SK-N-SH (cell line): ENCODE measurements at regions of chr17 and their contacts with region 1.

Region 1: GRCh38 chr17:19766422-19767270 is 18.5 kb upstream of the ALDH3A1 start:
- DNase-seq: peak; percentile 87
- H3K4me3 ChIP-seq: peak overlapping the region in 1 of 2 experiments; percentile 46; a peak in 1 of 4 replicates
- H3K27ac ChIP-seq: no peak overlapping the region
- H3K4me1 ChIP-seq: peaks cover 2 to 3% of the 10 kb centered on the region in 2 experiments; a peak in 2 of 4 replicates
- H3K27me3 ChIP-seq: no peaks in the 10 kb centered on the region
- CTCF ChIP-seq: peak; percentile 96
- EP300 ChIP-seq: no peak
- RAD21 ChIP-seq: peak; percentile 95

Region 2: GRCh38 chr17:19464031-19465026 is 302.3 kb before region 1 on chr17:
- CTCF ChIA-PET with region 1: interaction called, 11 read pairs
- POLR2A ChIA-PET with region 1: no interaction called
- DNase-seq: no peak
- H3K4me3 ChIP-seq: no peak overlapping the region
- H3K27ac ChIP-seq: no peak overlapping the region
- H3K4me1 ChIP-seq: no peaks in the 10 kb centered on the region; a peak in 1 of 4 replicates
- H3K27me3 ChIP-seq: no peaks in the 10 kb centered on the region
- CTCF ChIP-seq: no peak
- EP300 ChIP-seq: no peak
- RAD21 ChIP-seq: no peak

Region 3: GRCh38 chr17:19533718-19534561 is 232.7 kb before region 1 on chr17 and contains the start of gene SLC47A1:
- CTCF ChIA-PET with region 1: interaction called, 16 read pairs
- POLR2A ChIA-PET with region 1: no interaction called
- DNase-seq: peak; percentile 88
- H3K4me3 ChIP-seq: peak within 1 kb of the TSS; percentile 57 to 82
- H3K27ac ChIP-seq: no peak within 1 kb of the TSS
- H3K4me1 ChIP-seq: no peaks in the 10 kb centered on the region; a peak in 1 of 4 replicates
- H3K27me3 ChIP-seq: no peaks in the 10 kb centered on the region
- CTCF ChIP-seq: no peak
- EP300 ChIP-seq: no peak
- RAD21 ChIP-seq: no peak
- polyA plus RNA-seq, gene SLC47A1: 3.5 and 4.4 TPM in 2 replicates

Region 4: GRCh38 chr17:19648475-19649406 is 117.9 kb before region 1 on chr17 and contains the start of gene ALDH3A2:
- CTCF ChIA-PET with region 1: interaction called, 32 read pairs
- POLR2A ChIA-PET with region 1: interaction called, 12 read pairs
- DNase-seq: peak; percentile 99
- H3K4me3 ChIP-seq: peak within 1 kb of the TSS; percentile 76 to 87
- H3K27ac ChIP-seq: peak within 1 kb of the TSS; percentile 52 to 89
- H3K4me1 ChIP-seq: peaks cover 14 to 31% of the 10 kb centered on the region in 2 experiments
- H3K27me3 ChIP-seq: no peaks in the 10 kb centered on the region
- CTCF ChIP-seq: 0 out of 2 replicates have a peak, but pooled peaks have one; percentile 18
- EP300 ChIP-seq: no peak; a peak in 1 of 4 replicates
- RAD21 ChIP-seq: 0 out of 2 replicates have a peak, but pooled peaks have one; percentile 28
- polyA plus RNA-seq, gene ALDH3A2: 16.6 and 23.3 TPM in 2 replicates

Region 5: GRCh38 chr17:19728079-19728495 is 38.6 kb before region 1 on chr17:
- CTCF ChIA-PET with region 1: interaction called, 10 read pairs
- POLR2A ChIA-PET with region 1: no interaction called
- DNase-seq: peak; percentile 88
- H3K4me3 ChIP-seq: no peak overlapping the region
- H3K27ac ChIP-seq: peak overlapping the region in 1 of 2 experiments; percentile 80; a peak in 2 of 4 replicates
- H3K4me1 ChIP-seq: peaks cover 0 to 19% of the 10 kb centered on the region in 2 experiments; a peak in 2 of 4 replicates
- H3K27me3 ChIP-seq: no peaks in the 10 kb centered on the region
- CTCF ChIP-seq: no peak
- EP300 ChIP-seq: no peak
- RAD21 ChIP-seq: no peak

Region 6: DNA sequence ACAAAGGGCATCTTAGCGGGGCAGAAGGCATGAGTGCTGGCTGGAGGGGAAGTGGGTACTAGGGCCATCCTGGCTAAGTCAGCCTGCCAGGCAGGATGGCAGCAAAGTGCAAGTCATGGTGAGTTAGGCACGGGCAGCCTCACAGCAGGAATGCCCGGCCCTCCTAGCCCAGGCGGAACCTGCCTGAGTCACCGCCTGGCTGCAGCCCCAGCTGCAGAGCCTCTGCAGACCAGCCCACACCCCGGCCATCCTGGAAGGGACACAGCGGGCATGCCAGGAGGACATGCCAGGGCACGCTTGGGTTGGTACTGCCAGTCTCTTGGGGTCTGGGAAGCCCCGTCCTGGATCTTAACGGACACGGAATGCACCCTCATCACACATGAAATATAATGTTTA is 13.6 kb before region 1 on chr17:
- CTCF ChIA-PET with region 1: interaction called, 31 read pairs
- POLR2A ChIA-PET with region 1: no interaction called
- DNase-seq: peak; percentile 49
- H3K4me3 ChIP-seq: no peak overlapping the region
- H3K27ac ChIP-seq: peak overlapping the region; percentile 79 to 97
- H3K4me1 ChIP-seq: peaks cover 10 to 18% of the 10 kb centered on the region in 2 experiments; a peak in 3 of 4 replicates
- H3K27me3 ChIP-seq: no peaks in the 10 kb centered on the region
- CTCF ChIP-seq: no peak
- EP300 ChIP-seq: peak in 1 of 2 experiments; percentile 79; a peak in 1 of 4 replicates
- RAD21 ChIP-seq: no peak